Activated naive CD8-positive, alpha-beta T cell treated with anti-CD3 and anti-CD28 coated beads, Interleukin-2, amount 10 ng/mL, durations not matched to agents 7 days and 5 days (primary cell): ENCODE measurements at regions of chr12 and their contacts with region 1.

Region 1: GRCh38 chr12:94207849-94208621 is 59.7 kb downstream of the PLXNC1 start:
- DNase-seq: peak; percentile 41
- ATAC-seq: peak; percentile 71
- H3K4me3 Mint-ChIP-seq: peak overlapping the region; percentile 87
- H3K27ac Mint-ChIP-seq: peak overlapping the region; percentile 90
- H3K4me1 Mint-ChIP-seq: peaks cover 52% of the 10 kb centered on the region
- H3K27me3 Mint-ChIP-seq: no peaks in the 10 kb centered on the region

Region 2: DNA sequence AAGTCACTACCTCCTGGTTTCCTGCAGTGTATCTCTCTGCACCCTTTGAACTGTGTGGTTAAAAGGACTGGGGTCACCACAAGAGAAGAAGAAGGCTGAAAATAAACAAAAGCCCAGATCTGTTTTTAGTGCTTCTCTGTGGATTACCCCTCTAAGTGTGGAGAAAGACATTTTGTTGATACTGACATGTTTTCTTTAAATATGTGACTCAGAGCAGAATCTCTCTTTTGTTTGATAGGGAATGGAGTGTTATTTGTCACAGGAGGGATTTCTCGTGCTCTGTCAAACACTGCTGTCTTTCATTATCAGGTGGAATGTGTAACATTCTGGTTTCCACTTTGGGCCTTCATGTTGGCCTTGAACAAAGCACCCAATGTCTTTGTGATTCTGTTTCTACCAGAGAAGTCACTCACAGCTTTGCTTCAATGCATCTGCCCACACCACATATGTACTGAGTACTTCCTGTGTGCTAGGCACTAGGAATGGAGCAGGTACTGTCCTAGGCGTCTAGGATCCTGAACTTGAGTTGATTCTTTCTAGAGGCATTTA is 22.4 kb after region 1 on chr12:
- POLR2A ChIA-PET with region 1: no interaction called
- DNase-seq: no peak
- ATAC-seq: peak; percentile 83
- H3K4me3 Mint-ChIP-seq: peak overlapping the region; percentile 52
- H3K27ac Mint-ChIP-seq: peak overlapping the region; percentile 36
- H3K4me1 Mint-ChIP-seq: peaks cover 9% of the 10 kb centered on the region
- H3K27me3 Mint-ChIP-seq: no peaks in the 10 kb centered on the region

Region 3: GRCh38 chr12:94262228-94263010 is 54.4 kb after region 1 on chr12:
- POLR2A ChIA-PET with region 1: interaction called, 13 read pairs
- DNase-seq: peak; percentile 76
- ATAC-seq: peak; percentile 88
- H3K4me3 Mint-ChIP-seq: peak overlapping the region; percentile 90
- H3K27ac Mint-ChIP-seq: peak overlapping the region; percentile 96
- H3K4me1 Mint-ChIP-seq: peaks cover 39% of the 10 kb centered on the region
- H3K27me3 Mint-ChIP-seq: no peaks in the 10 kb centered on the region